Naive thymus-derived CD4-positive, alpha-beta T cell (primary cell): ENCODE measurements at regions of chr14 and their contacts with region 1.

Region 1: DNA sequence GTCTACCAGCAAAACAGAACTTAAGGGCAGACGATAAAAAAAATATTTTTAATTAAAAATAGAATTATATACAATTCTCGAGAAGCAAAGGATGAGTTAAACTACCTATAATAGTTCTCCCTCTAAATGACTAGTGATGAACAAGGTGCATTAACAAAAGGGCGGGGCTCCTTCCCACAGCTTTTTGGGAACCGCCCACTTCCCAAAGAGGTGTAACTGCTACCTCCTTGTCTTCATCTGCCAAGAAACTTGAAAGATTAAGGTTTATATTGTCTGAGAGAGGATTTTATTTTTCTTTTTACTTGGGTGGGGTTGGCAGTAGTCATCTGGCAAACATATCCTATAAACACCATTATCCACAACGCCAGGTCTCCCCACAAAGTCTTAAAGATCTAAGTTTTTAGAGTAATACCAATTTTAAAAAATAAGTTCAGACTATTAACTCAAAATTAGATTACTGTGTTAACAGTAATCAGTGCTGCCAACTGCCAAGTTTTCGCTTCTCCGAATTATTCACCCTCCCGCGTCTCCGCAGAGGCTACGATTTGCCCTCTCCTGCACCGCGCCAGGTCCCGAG is 931 bp downstream of the RALGAPA1 start:
- DNase-seq: peak in 1 of 9 donors; percentile 28
- ATAC-seq: no peak
- H3K4me3 ChIP-seq: peak overlapping the region; percentile 80
- H3K4me3 Mint-ChIP-seq: peak overlapping the region; percentile 85 to 99 (median 98)
- H3K27ac ChIP-seq: peak overlapping the region; percentile 77
- H3K27ac Mint-ChIP-seq: peak overlapping the region; percentile 80 to 97 (median 96)
- H3K4me1 ChIP-seq: peaks cover 14 to 16% of the 10 kb centered on the region in 2 donors
- H3K4me1 Mint-ChIP-seq: peaks cover 18 to 55% (median 34%) of the 10 kb centered on the region in 7 donors
- H3K27me3 ChIP-seq: no peaks in the 10 kb centered on the region
- H3K27me3 Mint-ChIP-seq: peaks cover 0 to 6% (median 0%) of the 10 kb centered on the region in 5 donors

Region 2: DNA sequence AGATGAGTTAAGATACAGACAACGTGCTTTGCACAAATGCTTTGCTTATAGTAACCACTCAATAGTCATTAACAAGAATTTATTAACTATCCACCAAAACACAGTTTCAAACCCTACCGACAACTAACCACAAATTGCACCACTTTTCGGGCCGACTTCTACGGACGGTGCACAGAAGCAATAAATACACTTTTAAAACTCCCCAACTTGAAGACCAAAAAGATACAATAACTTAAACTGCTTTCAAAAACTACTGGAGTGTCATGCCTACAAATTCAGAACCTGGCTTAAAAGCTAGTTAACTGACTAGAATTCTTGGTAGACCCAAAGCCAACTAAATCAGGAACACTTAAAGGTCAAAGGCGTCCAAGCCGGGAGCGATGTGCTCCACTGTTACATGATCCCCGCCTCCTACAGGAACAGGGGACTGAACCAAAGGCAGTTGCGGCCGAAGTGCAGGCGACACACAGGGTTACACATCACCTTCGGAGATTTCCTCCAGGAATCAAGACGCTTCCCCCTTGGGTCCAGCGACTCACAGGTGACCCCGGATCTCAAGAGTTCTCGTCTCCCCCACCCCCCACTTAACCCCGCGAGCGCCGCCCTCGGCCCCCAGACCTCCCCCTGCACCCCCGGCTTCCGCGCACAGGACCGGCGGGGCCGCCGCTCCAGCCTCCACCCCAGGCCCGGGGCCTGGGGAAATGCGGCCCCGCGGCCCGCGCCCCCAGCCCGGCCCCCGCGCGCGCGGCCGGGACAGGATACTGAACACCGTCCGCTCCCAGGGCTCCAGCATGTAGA is 1346.6 kb before region 1 on chr14:
- CTCF ChIA-PET with region 1: no interaction called
- POLR2A ChIA-PET with region 1: no interaction called
- intact Hi-C with region 1: loop called in 1 of 2 experiments (anchors 5 kb)
- DNase-seq: peak in 7 of 9 donors; percentile 2 to 22 (median 16)
- ATAC-seq: peak; percentile 4
- H3K4me3 ChIP-seq: peak overlapping the region; percentile 70
- H3K4me3 Mint-ChIP-seq: peak overlapping the region; percentile 83 to 97 (median 89)
- H3K27ac ChIP-seq: peak overlapping the region; percentile 78
- H3K27ac Mint-ChIP-seq: peak overlapping the region; percentile 60 to 94 (median 86)
- H3K4me1 ChIP-seq: peaks cover 0 to 6% of the 10 kb centered on the region in 2 donors
- H3K4me1 Mint-ChIP-seq: peaks cover 11 to 25% (median 15%) of the 10 kb centered on the region in 7 donors
- H3K27me3 ChIP-seq: no peaks in the 10 kb centered on the region
- H3K27me3 Mint-ChIP-seq: no peaks in the 10 kb centered on the region

Region 3: GRCh38 chr14:34629657-34630529 is 1178.3 kb before region 1 on chr14 and contains the start of gene SNX6:
- CTCF ChIA-PET with region 1: no interaction called
- POLR2A ChIA-PET with region 1: no interaction called
- intact Hi-C with region 1: loop called in 1 of 2 experiments (anchors 5 kb)
- DNase-seq: peak; percentile 75 to 87 (median 83)
- ATAC-seq: peak; percentile 100
- H3K4me3 ChIP-seq: peak within 1 kb of the TSS; percentile 72
- H3K4me3 Mint-ChIP-seq: peak within 1 kb of the TSS; percentile 89 to 100 (median 98)
- H3K27ac ChIP-seq: peak within 1 kb of the TSS; percentile 98
- H3K27ac Mint-ChIP-seq: peak within 1 kb of the TSS; percentile 92 to 97 (median 96)
- H3K4me1 ChIP-seq: peaks cover 17 to 20% of the 10 kb centered on the region in 2 donors
- H3K4me1 Mint-ChIP-seq: peaks cover 6 to 49% (median 33%) of the 10 kb centered on the region in 7 donors
- H3K27me3 ChIP-seq: no peaks in the 10 kb centered on the region
- H3K27me3 Mint-ChIP-seq: peaks cover 0 to 18% (median 0%) of the 10 kb centered on the region in 5 donors
- total RNA-seq, gene SNX6: 56.6 to 78.9 (median 59.7) TPM

Region 4: DNA sequence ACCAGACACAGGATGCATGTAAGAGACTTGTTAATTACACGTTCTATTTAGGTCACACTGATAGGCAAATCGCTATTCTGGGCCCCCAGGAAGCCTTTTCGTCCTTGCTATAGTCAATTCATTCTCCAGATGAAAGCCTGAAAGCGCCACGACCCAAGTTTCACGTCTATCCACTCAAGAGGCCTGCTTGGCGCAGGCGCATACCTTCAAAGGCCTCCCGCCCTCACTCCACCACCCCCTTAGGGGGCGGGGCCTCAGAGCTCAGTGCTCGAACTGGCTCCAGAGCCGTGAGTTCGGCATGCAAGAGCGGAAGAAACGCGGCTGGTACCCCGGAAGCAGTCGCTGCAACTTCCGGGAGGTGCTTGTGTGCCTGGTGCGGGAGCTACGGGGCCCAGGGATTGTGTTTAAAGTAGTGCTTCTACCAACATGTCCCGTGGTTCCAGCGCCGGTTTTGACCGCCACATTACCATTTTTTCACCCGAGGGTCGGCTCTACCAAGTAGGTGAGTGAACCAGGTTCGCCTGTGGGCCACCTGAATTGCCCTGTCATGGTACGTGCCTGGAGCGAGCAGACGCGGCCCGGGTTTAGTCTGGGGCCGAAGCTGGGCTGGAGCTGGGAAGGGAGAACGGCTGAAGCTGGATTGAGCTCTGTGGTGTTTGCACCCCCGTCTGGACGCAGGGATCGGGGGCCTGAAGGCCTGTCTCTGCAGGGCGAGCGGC is 516.0 kb before region 1 on chr14 and contains the start of gene PSMA6:
- CTCF ChIA-PET with region 1: no interaction called
- POLR2A ChIA-PET with region 1: no interaction called
- intact Hi-C with region 1: loop called in 1 of 2 experiments (anchors 1 kb)
- DNase-seq: peak; percentile 96 to 99 (median 99)
- ATAC-seq: peak; percentile 99
- H3K4me3 ChIP-seq: peak within 1 kb of the TSS; percentile 89
- H3K4me3 Mint-ChIP-seq: peak within 1 kb of the TSS; percentile 92 to 99 (median 97)
- H3K27ac ChIP-seq: peak within 1 kb of the TSS; percentile 90
- H3K27ac Mint-ChIP-seq: peak within 1 kb of the TSS; percentile 94 to 99 (median 96)
- H3K4me1 ChIP-seq: peaks cover 16 to 22% of the 10 kb centered on the region in 2 donors
- H3K4me1 Mint-ChIP-seq: peaks cover 17 to 54% (median 51%) of the 10 kb centered on the region in 7 donors
- H3K27me3 ChIP-seq: no peaks in the 10 kb centered on the region
- H3K27me3 Mint-ChIP-seq: no peaks in the 10 kb centered on the region
- total RNA-seq, gene PSMA6: 76.6 to 274 (median 90.0) TPM

Region 5: DNA sequence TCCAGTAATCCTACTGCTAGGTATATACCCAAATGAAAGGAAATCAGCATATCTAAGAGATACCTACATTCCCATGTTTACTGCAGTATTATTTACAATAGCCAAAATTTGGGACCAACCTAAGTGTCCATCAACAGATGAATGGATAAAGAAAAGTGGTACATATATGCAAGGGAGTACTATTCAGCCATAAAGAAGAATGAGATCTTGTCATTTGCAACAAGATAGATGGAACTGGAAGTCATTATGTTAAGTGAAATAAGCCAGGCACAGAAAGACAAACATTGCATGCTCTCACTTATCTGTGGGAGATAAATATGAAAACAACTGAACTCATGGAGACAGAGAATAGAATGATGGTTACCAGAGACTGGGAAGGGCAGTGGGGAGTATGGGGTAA is 164.7 kb before region 1 on chr14:
- CTCF ChIA-PET with region 1: no interaction called
- POLR2A ChIA-PET with region 1: no interaction called
- intact Hi-C with region 1: no loop called
- DNase-seq: no peak
- ATAC-seq: no peak
- H3K4me3 ChIP-seq: no peak overlapping the region
- H3K4me3 Mint-ChIP-seq: no peak overlapping the region
- H3K27ac ChIP-seq: no peak overlapping the region
- H3K27ac Mint-ChIP-seq: no peak overlapping the region
- H3K4me1 ChIP-seq: no peaks in the 10 kb centered on the region
- H3K4me1 Mint-ChIP-seq: no peaks in the 10 kb centered on the region
- H3K27me3 ChIP-seq: no peaks in the 10 kb centered on the region
- H3K27me3 Mint-ChIP-seq: no peaks in the 10 kb centered on the region

Region 6: DNA sequence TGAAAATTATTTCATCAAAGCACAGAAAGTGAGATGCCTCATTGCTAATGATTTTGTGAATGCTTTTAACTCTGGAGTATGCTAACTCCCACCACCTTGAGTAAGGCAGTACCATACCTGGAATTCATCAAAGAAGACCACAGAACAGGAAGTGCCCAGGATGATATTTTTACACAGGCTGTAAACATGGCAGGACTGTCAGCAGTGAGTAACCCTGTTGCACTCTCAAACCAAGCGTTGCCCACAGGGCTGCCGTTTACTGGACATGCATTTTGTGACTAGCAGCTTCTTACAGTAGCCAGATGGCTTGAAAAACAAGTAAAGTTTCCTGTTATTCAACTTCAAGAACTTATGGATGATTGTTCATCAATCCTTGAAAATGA is 41.5 kb before region 1 on chr14:
- CTCF ChIA-PET with region 1: interaction called, 3 read pairs
- POLR2A ChIA-PET with region 1: no interaction called
- intact Hi-C with region 1: loop called in 1 of 2 experiments (anchors 2 kb)
- DNase-seq: peak in 4 of 9 donors; percentile 4 to 18 (median 6)
- ATAC-seq: no peak
- H3K4me3 ChIP-seq: no peak overlapping the region
- H3K4me3 Mint-ChIP-seq: peak overlapping the region in 7 of 10 donors; percentile 22 to 65 (median 59)
- H3K27ac ChIP-seq: no peak overlapping the region
- H3K27ac Mint-ChIP-seq: peak overlapping the region in 4 of 9 donors; percentile 14 to 85 (median 40)
- H3K4me1 ChIP-seq: peaks cover 0 to 14% of the 10 kb centered on the region in 2 donors
- H3K4me1 Mint-ChIP-seq: peaks cover 6 to 35% (median 25%) of the 10 kb centered on the region in 7 donors
- H3K27me3 ChIP-seq: no peaks in the 10 kb centered on the region
- H3K27me3 Mint-ChIP-seq: no peaks in the 10 kb centered on the region

Region 7: DNA sequence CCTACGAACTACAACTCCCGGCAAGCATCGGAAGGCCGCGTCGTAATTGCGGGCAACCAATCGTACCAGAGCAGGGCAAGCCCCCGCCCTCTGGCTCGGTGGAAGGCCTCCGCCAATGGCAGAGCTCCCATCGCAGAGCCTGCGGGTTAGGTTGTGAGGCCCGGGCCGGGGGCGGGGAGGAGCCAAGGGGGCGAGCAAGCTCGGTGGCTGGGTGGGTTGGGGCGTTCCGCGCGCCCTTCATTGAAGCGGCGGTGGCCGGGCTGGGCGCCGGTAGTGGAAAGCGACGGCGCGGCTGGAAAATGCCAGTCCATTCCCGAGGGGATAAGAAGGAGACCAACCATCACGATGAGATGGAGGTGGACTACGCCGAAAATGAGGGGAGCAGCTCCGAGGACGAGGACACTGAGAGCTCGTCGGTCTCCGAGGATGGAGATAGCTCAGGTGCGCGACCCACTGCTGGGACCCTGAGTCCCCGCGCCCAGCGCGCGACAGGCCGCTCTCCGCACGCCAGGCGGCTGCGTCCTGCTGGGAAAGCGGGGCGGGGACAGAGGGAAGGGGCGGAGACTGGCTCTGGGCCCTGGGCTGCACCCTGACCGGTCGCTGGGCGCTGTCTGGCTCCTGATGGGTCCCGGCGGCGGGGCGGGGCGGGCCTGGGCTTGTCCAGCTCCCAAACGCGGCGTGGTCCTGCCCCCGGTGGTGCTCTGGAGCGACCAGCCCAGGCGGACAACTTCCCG is 18.2 kb after region 1 on chr14 and contains the start of gene BRMS1L:
- CTCF ChIA-PET with region 1: interaction called, 3 read pairs
- POLR2A ChIA-PET with region 1: interaction called, 7 read pairs
- intact Hi-C with region 1: loop called (anchors 1 kb)
- DNase-seq: peak; percentile 88 to 97 (median 96)
- ATAC-seq: peak; percentile 99
- H3K4me3 ChIP-seq: peak within 1 kb of the TSS; percentile 95
- H3K4me3 Mint-ChIP-seq: peak within 1 kb of the TSS; percentile 84 to 96 (median 90)
- H3K27ac ChIP-seq: peak within 1 kb of the TSS; percentile 87
- H3K27ac Mint-ChIP-seq: peak within 1 kb of the TSS; percentile 53 to 94 (median 88)
- H3K4me1 ChIP-seq: peaks cover 6 to 8% of the 10 kb centered on the region in 2 donors
- H3K4me1 Mint-ChIP-seq: peaks cover 11 to 31% (median 25%) of the 10 kb centered on the region in 7 donors
- H3K27me3 ChIP-seq: no peaks in the 10 kb centered on the region
- H3K27me3 Mint-ChIP-seq: no peaks in the 10 kb centered on the region
- total RNA-seq, gene BRMS1L: 4.2 to 8.6 (median 5.8) TPM

Region 8: GRCh38 chr14:35879654-35880249 is 71.6 kb after region 1 on chr14:
- CTCF ChIA-PET with region 1: no interaction called
- POLR2A ChIA-PET with region 1: no interaction called
- intact Hi-C with region 1: no loop called
- DNase-seq: peak in 3 of 9 donors; percentile 5 to 19 (median 9)
- ATAC-seq: no peak
- H3K4me3 ChIP-seq: no peak overlapping the region
- H3K4me3 Mint-ChIP-seq: no peak overlapping the region
- H3K27ac ChIP-seq: no peak overlapping the region
- H3K27ac Mint-ChIP-seq: no peak overlapping the region
- H3K4me1 ChIP-seq: no peaks in the 10 kb centered on the region
- H3K4me1 Mint-ChIP-seq: peaks cover 0 to 6% (median 0%) of the 10 kb centered on the region in 7 donors
- H3K27me3 ChIP-seq: no peaks in the 10 kb centered on the region
- H3K27me3 Mint-ChIP-seq: peaks cover 0 to 5% (median 0%) of the 10 kb centered on the region in 5 donors